ENCODE measurements at regions of chr6 and their contacts with region 1.

Region 1: DNA sequence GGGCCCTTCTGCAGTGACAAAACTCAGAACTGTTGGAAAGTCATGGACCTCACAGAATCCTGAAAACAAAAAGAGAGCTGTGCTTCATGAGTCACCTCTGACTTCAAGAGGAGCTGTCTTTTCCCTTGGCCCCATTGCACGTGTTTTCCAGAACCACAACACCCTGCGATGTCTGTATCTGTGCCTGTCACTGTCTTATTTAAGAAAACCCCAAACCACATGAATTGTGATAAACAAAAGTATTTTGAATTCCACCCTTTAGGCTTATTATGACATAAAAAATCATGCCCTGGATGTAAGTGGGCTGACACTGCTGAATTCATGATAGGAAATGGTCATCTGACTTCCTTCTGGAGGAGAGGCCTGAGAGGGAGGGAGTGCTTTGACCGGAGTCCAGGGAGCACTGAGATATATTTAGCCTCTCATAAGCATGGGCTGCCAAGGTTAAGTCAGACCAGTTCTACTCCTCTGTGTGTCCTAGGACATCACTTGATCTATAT is 96.4 kb upstream of the DUSP22 start:
- DNase-seq: peak in 8 of 9 donors; percentile 42 to 76 (median 64)
- ATAC-seq: peak; percentile 88
- H3K4me3 ChIP-seq: no peak overlapping the region
- H3K4me3 Mint-ChIP-seq: peak overlapping the region in 9 of 10 donors; percentile 16 to 72 (median 44)
- H3K27ac ChIP-seq: no peak overlapping the region
- H3K27ac Mint-ChIP-seq: peak overlapping the region; percentile 16 to 89 (median 69)
- H3K4me1 ChIP-seq: peaks cover 31 to 32% of the 10 kb centered on the region in 2 donors
- H3K4me1 Mint-ChIP-seq: peaks cover 32 to 48% (median 43%) of the 10 kb centered on the region in 7 donors
- H3K27me3 ChIP-seq: no peaks in the 10 kb centered on the region
- H3K27me3 Mint-ChIP-seq: no peaks in the 10 kb centered on the region

Region 2: DNA sequence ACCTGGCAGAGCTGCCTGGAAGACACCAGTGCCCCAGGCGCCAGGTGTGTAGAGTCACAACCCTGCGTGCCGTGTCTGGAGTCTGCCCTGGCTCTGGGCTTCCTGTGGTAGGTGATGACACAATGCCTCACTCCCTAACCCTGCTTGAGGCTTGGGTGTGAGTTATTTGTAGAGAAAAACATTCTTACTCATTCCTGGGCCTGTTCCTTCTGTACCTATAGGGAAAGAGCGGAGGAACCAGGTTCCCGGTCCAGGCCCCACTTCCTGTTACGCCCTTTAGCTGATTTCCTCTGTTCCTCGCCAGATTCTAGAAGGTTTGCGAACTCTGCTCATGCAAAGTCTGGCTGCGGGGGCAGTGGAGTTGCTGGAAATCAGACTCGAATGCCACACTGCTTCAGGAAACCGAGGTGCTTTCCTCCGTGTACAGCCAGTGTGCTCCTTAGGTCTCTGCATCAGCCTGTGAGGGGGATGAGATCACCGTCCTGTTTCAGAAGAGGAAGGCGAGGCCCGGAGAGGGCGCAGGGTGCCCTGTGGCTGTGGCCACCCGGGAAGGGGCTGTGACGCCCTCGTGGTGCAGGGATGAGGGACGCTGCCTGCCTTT is 29.3 kb after region 1 on chr6:
- CTCF ChIA-PET with region 1: interaction called, 4 read pairs
- POLR2A ChIA-PET with region 1: interaction called, 3 read pairs
- intact Hi-C with region 1: loop called (anchors 2 kb)
- DNase-seq: peak in 8 of 9 donors; percentile 2 to 73 (median 20)
- ATAC-seq: peak; percentile 79
- H3K4me3 ChIP-seq: peak overlapping the region; percentile 6
- H3K4me3 Mint-ChIP-seq: peak overlapping the region; percentile 66 to 87 (median 80)
- H3K27ac ChIP-seq: no peak overlapping the region
- H3K27ac Mint-ChIP-seq: peak overlapping the region in 8 of 9 donors; percentile 56 to 99 (median 88)
- H3K4me1 ChIP-seq: peaks cover 20 to 21% of the 10 kb centered on the region in 2 donors
- H3K4me1 Mint-ChIP-seq: peaks cover 11 to 74% (median 29%) of the 10 kb centered on the region in 7 donors
- H3K27me3 ChIP-seq: no peaks in the 10 kb centered on the region
- H3K27me3 Mint-ChIP-seq: no peaks in the 10 kb centered on the region

Region 3: DNA sequence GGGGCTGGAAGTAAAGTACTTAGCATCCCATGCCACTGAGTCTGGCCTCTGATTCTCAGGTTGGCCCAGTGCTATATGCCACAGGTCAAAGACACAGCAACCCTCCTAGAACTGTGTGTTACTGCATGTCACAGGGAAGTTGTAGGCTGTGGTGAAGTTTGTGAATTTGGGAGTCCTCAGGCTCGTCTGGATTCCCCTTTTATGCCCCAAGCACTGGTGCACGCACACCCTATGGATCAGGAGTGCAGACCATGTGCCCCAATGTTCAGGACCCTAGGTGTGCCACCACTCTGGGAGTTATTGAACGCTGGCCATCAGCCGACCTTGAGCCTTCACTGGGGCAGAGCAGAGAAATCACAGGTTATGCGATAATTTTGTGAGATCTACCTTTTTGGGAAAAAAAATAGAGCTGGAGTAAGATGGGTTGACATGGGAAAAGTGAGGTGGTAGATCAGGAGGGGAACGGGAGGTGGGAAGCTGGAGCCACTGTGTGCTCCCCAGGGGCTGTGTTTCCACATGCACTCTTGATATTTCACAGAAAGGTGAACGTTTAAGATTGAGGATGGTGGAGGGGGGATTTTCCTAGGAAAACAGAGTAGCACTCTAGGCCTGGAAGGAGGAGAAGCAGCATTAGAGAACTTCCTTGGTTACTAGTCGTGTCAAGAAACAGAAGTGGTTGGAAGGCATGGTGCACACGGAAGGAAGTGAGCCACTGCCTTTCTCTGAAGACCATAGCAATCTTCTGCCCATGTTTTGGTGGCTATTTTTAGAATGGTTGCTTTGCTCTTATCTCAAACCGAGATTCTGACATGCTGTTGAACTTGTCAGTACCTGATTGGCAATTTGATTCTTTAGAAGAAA is 140.5 kb after region 1 on chr6:
- CTCF ChIA-PET with region 1: no interaction called
- POLR2A ChIA-PET with region 1: no interaction called
- intact Hi-C with region 1: loop called in 1 of 2 experiments (anchors 2 kb)
- DNase-seq: peak in 2 of 9 donors; percentile 13 to 18
- ATAC-seq: peak; percentile 58
- H3K4me3 ChIP-seq: no peak overlapping the region
- H3K4me3 Mint-ChIP-seq: peak overlapping the region; percentile 2 to 74 (median 42)
- H3K27ac ChIP-seq: no peak overlapping the region
- H3K27ac Mint-ChIP-seq: peak overlapping the region in 7 of 9 donors; percentile 18 to 87 (median 60)
- H3K4me1 ChIP-seq: peaks cover 21 to 28% of the 10 kb centered on the region in 2 donors
- H3K4me1 Mint-ChIP-seq: peaks cover 28 to 54% (median 52%) of the 10 kb centered on the region in 7 donors
- H3K27me3 ChIP-seq: no peaks in the 10 kb centered on the region
- H3K27me3 Mint-ChIP-seq: no peaks in the 10 kb centered on the region